ENCODE measurements at regions of chr1 and their contacts with region 1.

Region 1: DNA sequence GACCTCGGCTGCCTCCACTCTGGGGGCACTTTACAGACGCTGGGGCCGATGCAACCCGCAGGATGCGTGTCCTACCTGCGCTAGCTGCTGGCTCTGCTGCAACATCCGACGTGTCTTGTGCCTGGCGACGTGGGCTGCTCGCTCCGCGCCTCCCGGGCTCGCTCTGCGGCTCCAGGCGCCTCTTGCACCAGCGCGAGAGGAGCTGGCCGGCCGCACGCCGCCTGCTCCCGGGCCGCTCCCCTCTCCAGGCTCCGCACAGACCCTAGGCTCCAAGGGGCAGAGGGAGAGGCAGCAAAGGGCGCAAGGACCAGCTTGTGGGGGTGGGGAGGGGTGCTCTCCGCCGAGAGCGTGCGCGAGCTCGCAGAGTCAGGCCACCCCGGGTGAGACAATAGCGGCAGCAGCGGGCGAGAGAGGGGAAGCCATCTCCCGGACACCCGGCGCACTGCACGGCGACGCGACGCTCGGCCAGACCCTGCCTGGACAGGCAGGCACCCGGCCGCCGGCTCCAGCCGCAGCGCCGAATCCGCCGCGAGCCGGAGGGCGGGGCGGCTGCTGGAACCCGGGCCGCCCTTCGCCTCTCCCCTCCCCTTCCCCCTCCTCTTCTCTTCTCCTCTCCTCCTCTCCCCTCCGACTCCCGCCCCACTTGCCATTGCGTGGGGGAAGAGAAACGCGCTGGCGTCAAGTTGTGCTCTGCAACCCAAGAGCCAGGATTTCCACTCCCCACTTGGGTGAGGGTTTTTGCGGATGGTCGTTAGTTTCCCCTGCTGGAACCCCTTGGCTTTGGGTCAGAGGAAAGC is at the start of gene PIK3C2B:
- DNase-seq: peak; percentile 87 to 93 (median 89)
- ATAC-seq: peak; percentile 90 to 96 (median 94)
- H3K4me3 ChIP-seq: peak within 1 kb of the TSS; percentile 59 to 86 (median 75)
- H3K27ac ChIP-seq: peak within 1 kb of the TSS; percentile 67 to 98 (median 90)
- H3K4me1 ChIP-seq: peaks cover 3 to 46% (median 30%) of the 10 kb centered on the region in 12 donors
- H3K27me3 ChIP-seq: no peaks in the 10 kb centered on the region
- CTCF ChIP-seq: peak; percentile 36 to 78 (median 65)
- POLR2A ChIP-seq: peak in 1 of 2 donors; percentile 65
- total RNA-seq, gene PIK3C2B: 12.9 to 42.5 (median 19.8) TPM

Region 2: DNA sequence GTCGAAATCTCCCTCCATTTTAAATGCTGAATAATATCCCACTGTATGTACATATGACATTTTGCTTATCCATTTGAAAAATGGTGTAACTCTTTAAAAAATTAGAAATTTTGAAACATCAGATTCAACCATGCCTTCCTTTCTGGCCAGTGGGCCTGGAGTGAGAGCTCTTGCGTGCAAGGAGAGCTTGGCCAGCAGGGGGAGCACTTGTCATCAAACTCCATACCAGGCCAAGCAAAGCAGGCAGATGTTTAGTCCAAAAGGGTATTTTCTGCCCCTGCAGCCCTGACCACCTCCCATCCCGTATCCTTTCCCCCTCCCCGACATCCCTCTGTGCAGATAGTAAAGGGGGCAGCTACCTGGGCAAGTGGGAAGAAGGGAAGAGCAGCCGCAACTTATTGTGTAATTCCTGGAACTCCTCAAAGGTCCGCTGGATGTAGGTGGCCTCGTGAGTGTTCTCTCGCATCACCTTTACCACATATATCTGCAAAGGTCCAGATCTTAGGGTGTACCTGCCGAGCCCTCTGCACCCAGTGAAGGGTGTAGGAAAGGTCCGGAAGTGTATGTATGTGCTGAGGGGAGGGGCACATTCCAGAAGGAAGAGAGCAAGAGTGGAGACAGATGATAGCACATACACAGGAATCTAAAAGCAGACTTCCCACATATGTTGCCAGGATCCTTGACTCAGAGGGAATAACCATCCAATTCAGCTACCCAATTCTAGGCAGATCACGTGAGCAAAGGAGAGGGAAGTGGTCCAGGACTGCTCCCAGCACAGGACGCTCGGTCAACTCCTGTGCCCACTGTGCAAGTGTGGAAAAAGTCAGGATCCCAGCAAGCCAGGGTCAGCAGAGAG is 62.9 kb before region 1 on chr1:
- intact Hi-C with region 1: loop called in 1 of 10 experiments (anchors 2 kb)
- DNase-seq: peak; percentile 71 to 87 (median 82)
- ATAC-seq: peak; percentile 40 to 81 (median 66)
- H3K4me3 ChIP-seq: no peak overlapping the region
- H3K27ac ChIP-seq: peak overlapping the region in 3 of 12 donors; percentile 8 to 45 (median 24)
- H3K4me1 ChIP-seq: peaks cover 0 to 37% (median 9%) of the 10 kb centered on the region in 12 donors
- H3K27me3 ChIP-seq: no peaks in the 10 kb centered on the region
- CTCF ChIP-seq: peak; percentile 82 to 96 (median 91)
- POLR2A ChIP-seq: no peak

Region 3: DNA sequence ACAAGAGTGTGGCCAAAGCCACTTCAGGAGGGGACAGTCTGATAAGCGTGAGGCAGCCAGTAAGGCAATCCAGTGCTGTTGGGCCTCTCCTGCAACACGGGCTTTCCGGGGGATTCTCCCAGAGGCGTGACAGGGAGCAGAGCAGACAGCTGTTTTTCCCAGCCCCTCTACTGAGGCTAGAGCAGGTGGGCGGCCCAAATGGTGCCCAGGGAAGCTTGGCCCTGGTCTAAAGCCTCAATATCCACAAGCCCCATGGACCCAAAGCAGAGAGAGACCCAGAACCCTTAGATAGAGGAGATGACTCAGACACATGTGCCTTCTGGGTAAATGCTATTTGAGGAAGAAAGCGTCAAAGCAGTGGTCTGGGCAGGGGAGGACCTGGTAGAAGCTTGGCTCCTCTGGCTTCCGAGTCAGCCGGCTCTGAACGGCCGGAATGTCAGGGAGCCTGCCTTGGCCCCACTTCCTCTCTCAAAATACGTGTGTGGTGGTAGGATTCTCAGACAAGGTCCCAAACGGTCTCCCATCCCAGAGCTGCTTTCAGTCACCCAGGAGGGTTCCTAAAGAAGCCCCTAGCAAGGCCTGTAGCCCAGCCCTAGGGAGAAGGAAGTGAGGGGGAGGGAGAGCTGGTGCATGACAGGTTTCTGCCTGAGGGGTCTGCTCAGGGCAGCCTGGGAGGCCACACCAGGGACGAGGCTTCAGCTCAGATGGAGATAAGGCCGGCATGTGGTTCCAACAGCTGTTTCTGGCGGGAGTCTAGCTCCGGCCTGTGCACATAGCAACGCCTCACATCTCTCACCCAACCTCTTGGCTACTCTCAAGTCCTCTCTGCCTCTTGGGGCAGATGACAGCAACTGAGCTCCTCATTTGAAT is 28.7 kb before region 1 on chr1:
- intact Hi-C with region 1: loop called in 1 of 10 experiments (anchors 2 kb)
- DNase-seq: peak in 3 of 5 donors; percentile 53 to 67 (median 54)
- ATAC-seq: peak; percentile 3 to 27 (median 20)
- H3K4me3 ChIP-seq: peak overlapping the region in 9 of 12 donors; percentile 28 to 48 (median 36)
- H3K27ac ChIP-seq: peak overlapping the region; percentile 77 to 99 (median 90)
- H3K4me1 ChIP-seq: peaks cover 24 to 93% (median 79%) of the 10 kb centered on the region in 12 donors
- H3K27me3 ChIP-seq: no peaks in the 10 kb centered on the region
- CTCF ChIP-seq: no peak
- POLR2A ChIP-seq: no peak

Region 4: DNA sequence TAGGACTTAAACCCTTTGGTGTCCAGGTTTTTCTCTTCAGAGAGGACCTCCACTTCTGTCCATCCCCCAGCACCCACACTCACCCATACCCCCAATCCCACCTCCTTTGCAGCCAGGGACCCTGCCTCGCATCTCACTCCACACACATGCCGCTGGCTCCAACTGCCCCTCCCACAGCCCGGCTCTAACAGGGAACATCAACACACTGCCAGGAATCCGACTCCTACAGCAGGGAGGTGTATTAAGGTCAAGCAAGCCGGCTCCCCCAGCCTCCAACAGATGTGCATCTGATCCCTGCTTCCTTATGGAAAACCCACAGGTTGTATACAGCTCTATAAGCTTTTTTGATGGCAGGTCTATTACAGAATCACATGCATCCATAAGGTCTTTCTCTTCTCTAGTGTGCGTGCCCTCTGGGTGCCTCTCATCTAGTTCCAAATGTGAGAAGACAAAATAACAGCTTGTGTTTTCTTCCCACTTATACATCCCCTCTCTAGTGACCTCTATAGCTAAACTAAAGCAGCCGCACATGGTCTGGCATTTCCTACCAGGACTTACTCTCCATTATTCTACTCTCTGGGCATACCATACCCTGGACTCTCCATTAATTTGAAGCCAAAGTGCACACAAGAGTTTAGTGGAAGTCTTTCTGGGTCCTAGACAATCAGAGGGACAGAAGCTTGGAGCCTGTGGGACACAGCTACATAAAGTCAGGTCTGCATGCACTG is 16.1 kb before region 1 on chr1:
- intact Hi-C with region 1: loop called in 1 of 10 experiments (anchors 2 kb)
- DNase-seq: no peak
- ATAC-seq: peak in 3 of 4 donors; percentile 27 to 60 (median 45)
- H3K4me3 ChIP-seq: no peak overlapping the region
- H3K27ac ChIP-seq: peak overlapping the region in 6 of 12 donors; percentile 10 to 67 (median 25)
- H3K4me1 ChIP-seq: peaks cover 6 to 95% (median 82%) of the 10 kb centered on the region in 12 donors
- H3K27me3 ChIP-seq: no peaks in the 10 kb centered on the region
- CTCF ChIP-seq: no peak
- POLR2A ChIP-seq: no peak